ENCODE measurements at regions of chr17 and their contacts with region 1.

Region 1: GRCh38 chr17:17890773-17891759 is 54.3 kb upstream of the SREBF1 start:
- DNase-seq: no peak
- H3K4me3 ChIP-seq: no peak overlapping the region
- H3K27ac ChIP-seq: no peak overlapping the region
- H3K4me1 ChIP-seq: peaks cover 0 to 25% (median 14%) of the 10 kb centered on the region in 4 donors
- H3K27me3 ChIP-seq: no peaks in the 10 kb centered on the region
- CTCF ChIP-seq: peak; percentile 39 to 60 (median 50)
- EP300 ChIP-seq: no peak
- POLR2A ChIP-seq: no peak

Region 2: GRCh38 chr17:17972126-17972951 is 81.3 kb after region 1 on chr17 and contains the starts of genes DRC3 and TOM1L2:
- intact Hi-C with region 1: loop called (anchors 10 kb)
- DNase-seq: peak; percentile 100
- H3K4me3 ChIP-seq: peak within 1 kb of the TSS; percentile 79 to 95 (median 92)
- H3K27ac ChIP-seq: peak within 1 kb of the TSS; percentile 86 to 96 (median 93)
- H3K4me1 ChIP-seq: peaks cover 26 to 51% (median 43%) of the 10 kb centered on the region in 4 donors
- H3K27me3 ChIP-seq: no peaks in the 10 kb centered on the region
- CTCF ChIP-seq: no peak
- EP300 ChIP-seq: no peak
- POLR2A ChIP-seq: peak; percentile 57
- total RNA-seq, gene DRC3: 0.71 to 4.2 (median 1.4) TPM
- total RNA-seq, gene TOM1L2: 64.4 to 96.9 (median 75.0) TPM

Region 3: DNA sequence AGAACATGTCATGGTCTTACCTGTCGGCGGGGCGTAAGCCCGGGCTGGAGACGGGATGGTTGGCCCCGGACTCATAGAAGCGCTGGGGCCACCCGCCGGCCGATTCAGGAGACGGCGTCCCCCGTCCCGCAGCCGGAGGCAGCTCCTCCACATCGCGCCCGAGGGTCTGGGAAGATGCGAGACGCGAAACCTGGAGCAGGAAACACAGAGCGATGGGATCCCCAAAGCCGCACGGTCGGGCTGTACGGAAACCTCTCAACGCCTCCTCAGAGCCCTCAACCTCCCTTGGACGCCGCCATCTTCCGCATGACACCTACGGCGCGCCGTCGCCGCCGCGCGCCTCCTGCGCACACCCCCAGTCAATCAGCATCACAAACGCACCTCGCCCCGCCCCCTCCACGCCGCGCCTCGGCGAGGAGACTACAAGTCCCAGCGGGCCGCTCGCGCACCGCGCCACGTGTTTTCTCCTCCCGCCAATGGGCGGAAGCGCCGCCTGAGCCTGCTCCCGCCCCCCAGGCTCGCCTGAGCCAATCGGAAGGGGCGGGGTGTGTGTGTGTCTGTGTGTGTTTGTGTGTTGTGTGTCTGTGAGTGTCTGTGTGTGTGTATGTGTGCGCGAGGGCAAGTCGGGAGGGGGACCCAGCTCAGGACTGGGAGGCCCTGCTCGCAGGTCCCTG is 147.9 kb after region 1 on chr17 and contains the starts of genes ATPAF2 and GID4:
- intact Hi-C with region 1: loop called (anchors 10 kb)
- DNase-seq: peak; percentile 100
- H3K4me3 ChIP-seq: peak within 1 kb of the TSS; percentile 75 to 97 (median 83)
- H3K27ac ChIP-seq: peak within 1 kb of the TSS; percentile 85 to 90 (median 88)
- H3K4me1 ChIP-seq: peaks cover 32 to 59% (median 46%) of the 10 kb centered on the region in 4 donors
- H3K27me3 ChIP-seq: no peaks in the 10 kb centered on the region
- CTCF ChIP-seq: peak in 2 of 3 experiments; percentile 4 to 6
- EP300 ChIP-seq: no peak
- POLR2A ChIP-seq: no peak
- total RNA-seq, gene ATPAF2: 10.4 to 26.1 (median 12.3) TPM
- total RNA-seq, gene GID4: 33.1 to 39.8 (median 34.4) TPM

Measured in esophagus muscularis mucosa (tissue), 4 donors.